ENCODE measurements at regions of chr3 and their contacts with region 1.

Region 1: DNA sequence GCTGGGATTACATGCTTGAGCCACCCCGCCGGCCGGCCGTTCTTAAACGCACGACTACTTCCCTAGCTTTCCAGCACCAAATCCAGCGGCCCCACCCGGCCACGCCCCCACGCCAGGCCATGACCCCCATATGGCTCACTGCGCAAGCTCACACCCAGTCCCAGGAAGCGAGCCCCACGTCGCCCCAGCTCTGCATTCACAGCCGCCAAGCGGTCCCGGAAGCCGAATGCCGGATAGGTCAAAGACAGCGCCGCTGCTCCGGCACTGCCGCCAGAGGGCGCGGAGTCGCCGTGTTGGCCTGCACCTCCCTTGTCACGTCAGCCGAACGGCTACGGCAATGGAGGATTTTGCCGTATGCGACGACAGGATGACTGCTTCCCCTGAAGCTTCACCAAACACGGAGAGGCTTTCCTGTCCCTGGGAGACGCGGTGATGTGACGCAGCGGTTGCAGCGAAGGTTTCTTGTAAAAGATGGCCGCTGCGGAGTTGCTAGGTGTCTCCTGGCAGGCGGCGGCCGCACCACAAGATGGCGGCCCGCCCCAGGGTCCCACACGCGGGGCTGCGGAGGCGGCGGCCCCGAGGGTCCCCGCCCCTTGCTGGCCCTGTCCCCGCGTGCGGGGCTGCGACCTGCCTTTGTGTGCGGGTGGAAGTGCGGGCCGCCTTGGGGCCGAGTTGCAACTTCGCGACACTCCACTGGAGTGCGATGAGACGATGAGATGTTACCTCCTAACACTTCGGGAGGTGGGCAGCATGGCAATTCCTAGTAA is 30.2 kb upstream of the RPN1 start:
- DNase-seq: peak; percentile 96
- H3K4me3 ChIP-seq: peak overlapping the region; percentile 60 to 77 (median 60)
- H3K27ac ChIP-seq: peak overlapping the region; percentile 76
- H3K4me1 ChIP-seq: no peaks in the 10 kb centered on the region
- H3K27me3 ChIP-seq: no peaks in the 10 kb centered on the region
- CTCF ChIP-seq: peak; percentile 100

Region 2: GRCh38 chr3:128725932-128726690 is 45.3 kb after region 1 on chr3 and contains the start of gene RAB7A:
- CTCF ChIA-PET with region 1: interaction called, 3 read pairs
- dilution Hi-C with region 1: no loop called
- in situ Hi-C with region 1: no loop called
- intact Hi-C with region 1: loop called (anchors 1 kb)
- DNase-seq: peak; percentile 97
- H3K4me3 ChIP-seq: peak within 1 kb of the TSS; percentile 80 to 100 (median 85)
- H3K27ac ChIP-seq: peak within 1 kb of the TSS; percentile 98
- H3K4me1 ChIP-seq: peaks cover 15% of the 10 kb centered on the region
- H3K27me3 ChIP-seq: no peaks in the 10 kb centered on the region
- CTCF ChIP-seq: no peak
- total RNA-seq, gene RAB7A: 76.7 to 352 TPM

Region 3: GRCh38 chr3:128787256-128788240 is 106.8 kb after region 1 on chr3:
- CTCF ChIA-PET with region 1: interaction called, 3 read pairs
- dilution Hi-C with region 1: loop called (anchors 5 kb)
- in situ Hi-C with region 1: loop called in 1 of 2 experiments (anchors 10 kb)
- intact Hi-C with region 1: loop called (anchors 2 kb)
- DNase-seq: peak; percentile 96
- H3K4me3 ChIP-seq: no peak overlapping the region
- H3K27ac ChIP-seq: peak overlapping the region; percentile 88
- H3K4me1 ChIP-seq: peaks cover 37% of the 10 kb centered on the region
- H3K27me3 ChIP-seq: no peaks in the 10 kb centered on the region
- CTCF ChIP-seq: peak; percentile 59 to 72

Region 4: DNA sequence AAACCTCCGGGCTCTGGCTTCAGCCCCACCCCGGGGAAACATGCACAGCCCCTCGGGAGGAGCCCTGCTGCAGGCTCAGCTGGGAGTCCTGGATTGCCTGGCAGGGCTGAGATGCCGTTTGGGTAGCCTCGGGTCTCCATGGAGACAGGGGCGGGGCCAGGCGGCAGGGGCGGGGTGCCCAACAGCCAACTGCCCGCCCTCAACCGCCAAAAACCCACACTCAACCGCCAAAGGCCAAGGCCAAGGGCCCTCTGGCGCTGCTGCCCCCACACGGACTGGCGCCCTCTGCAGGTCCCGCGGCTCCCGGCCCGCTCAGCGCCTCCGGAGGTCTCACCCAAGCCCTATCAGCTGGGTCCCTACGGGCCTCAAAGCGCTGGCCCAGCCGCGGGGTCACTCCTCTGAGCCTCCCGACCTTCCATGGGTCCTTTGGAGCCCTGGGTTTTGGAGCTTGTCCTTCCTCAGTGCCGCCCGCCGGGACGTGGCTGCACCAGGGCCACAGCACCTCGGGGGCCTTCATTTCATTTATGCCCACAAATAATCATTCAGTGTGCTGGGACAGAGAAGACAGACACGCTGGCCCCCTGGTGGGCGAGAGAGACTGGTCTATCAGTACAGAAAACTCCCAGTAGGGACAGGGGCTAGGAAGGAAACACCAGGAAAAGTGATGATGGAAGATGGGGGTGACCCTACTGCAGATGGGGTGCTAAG is 165.1 kb after region 1 on chr3:
- CTCF ChIA-PET with region 1: no interaction called
- dilution Hi-C with region 1: no loop called
- in situ Hi-C with region 1: no loop called
- intact Hi-C with region 1: loop called (anchors 1 kb)
- DNase-seq: peak; percentile 59
- H3K4me3 ChIP-seq: peak overlapping the region in 2 of 3 experiments; percentile 24 to 28
- H3K27ac ChIP-seq: no peak overlapping the region
- H3K4me1 ChIP-seq: peaks cover 7% of the 10 kb centered on the region
- H3K27me3 ChIP-seq: no peaks in the 10 kb centered on the region
- CTCF ChIP-seq: peak; percentile 26 to 52

Region 5: GRCh38 chr3:128910006-128910405 is 229.2 kb after region 1 on chr3:
- CTCF ChIA-PET with region 1: no interaction called
- dilution Hi-C with region 1: loop called (anchors 5 kb)
- in situ Hi-C with region 1: no loop called
- intact Hi-C with region 1: no loop called
- DNase-seq: no peak
- H3K4me3 ChIP-seq: no peak overlapping the region
- H3K27ac ChIP-seq: no peak overlapping the region
- H3K4me1 ChIP-seq: no peaks in the 10 kb centered on the region
- H3K27me3 ChIP-seq: no peaks in the 10 kb centered on the region
- CTCF ChIP-seq: no peak

Region 6: GRCh38 chr3:129016356-129016719 is 335.6 kb after region 1 on chr3:
- CTCF ChIA-PET with region 1: no interaction called
- dilution Hi-C with region 1: loop called (anchors 10 kb)
- in situ Hi-C with region 1: no loop called
- intact Hi-C with region 1: no loop called
- DNase-seq: no peak
- H3K4me3 ChIP-seq: no peak overlapping the region
- H3K27ac ChIP-seq: no peak overlapping the region
- H3K4me1 ChIP-seq: no peaks in the 10 kb centered on the region
- H3K27me3 ChIP-seq: no peaks in the 10 kb centered on the region
- CTCF ChIP-seq: peak in 1 of 2 donors; percentile 45

Measured in mammary epithelial cell (primary cell).